Activated B cell treated with CpG ODN at 0.5 μM for 24 hours (primary cell): ENCODE measurements at regions of chr16 and their contacts with region 1.

Region 1: GRCh38 chr16:11715246-11715947 is 27.3 kb downstream of the TXNDC11 start:
- DNase-seq: no peak
- ATAC-seq: peak; percentile 29
- H3K4me3 Mint-ChIP-seq: no peak overlapping the region
- H3K27ac Mint-ChIP-seq: peak overlapping the region; percentile 50
- H3K4me1 Mint-ChIP-seq: peaks cover 36% of the 10 kb centered on the region
- H3K27me3 Mint-ChIP-seq: no peaks in the 10 kb centered on the region
- CTCF ChIP-seq: no peak

Region 2: GRCh38 chr16:11396241-11397048 is 319.0 kb before region 1 on chr16:
- CTCF ChIA-PET with region 1: interaction called, 5 read pairs
- POLR2A ChIA-PET with region 1: no interaction called
- intact Hi-C with region 1: loop called (anchors 1 kb)
- DNase-seq: peak; percentile 63
- ATAC-seq: peak; percentile 81
- H3K4me3 Mint-ChIP-seq: no peak overlapping the region
- H3K27ac Mint-ChIP-seq: no peak overlapping the region
- H3K4me1 Mint-ChIP-seq: peaks cover 4% of the 10 kb centered on the region
- H3K27me3 Mint-ChIP-seq: no peaks in the 10 kb centered on the region
- CTCF ChIP-seq: peak; percentile 90

Region 3: GRCh38 chr16:11530171-11530940 is 185.0 kb before region 1 on chr16:
- CTCF ChIA-PET with region 1: interaction called, 49 read pairs
- POLR2A ChIA-PET with region 1: no interaction called
- intact Hi-C with region 1: loop called (anchors 1 kb)
- DNase-seq: no peak
- ATAC-seq: no peak
- H3K4me3 Mint-ChIP-seq: no peak overlapping the region
- H3K27ac Mint-ChIP-seq: no peak overlapping the region
- H3K4me1 Mint-ChIP-seq: no peaks in the 10 kb centered on the region
- H3K27me3 Mint-ChIP-seq: peaks cover 6% of the 10 kb centered on the region
- CTCF ChIP-seq: no peak

Region 4: GRCh38 chr16:11611871-11612664 is 103.3 kb before region 1 on chr16:
- CTCF ChIA-PET with region 1: no interaction called
- POLR2A ChIA-PET with region 1: no interaction called
- intact Hi-C with region 1: no loop called
- DNase-seq: no peak
- ATAC-seq: no peak
- H3K4me3 Mint-ChIP-seq: peak overlapping the region; percentile 30
- H3K27ac Mint-ChIP-seq: no peak overlapping the region
- H3K4me1 Mint-ChIP-seq: peaks cover 38% of the 10 kb centered on the region
- H3K27me3 Mint-ChIP-seq: no peaks in the 10 kb centered on the region
- CTCF ChIP-seq: no peak

Region 5: GRCh38 chr16:11639925-11640899 is 75.2 kb before region 1 on chr16:
- CTCF ChIA-PET with region 1: interaction called, 35 read pairs
- POLR2A ChIA-PET with region 1: interaction called, 6 read pairs
- intact Hi-C with region 1: loop called (anchors 1 kb)
- DNase-seq: no peak
- ATAC-seq: no peak
- H3K4me3 Mint-ChIP-seq: no peak overlapping the region
- H3K27ac Mint-ChIP-seq: no peak overlapping the region
- H3K4me1 Mint-ChIP-seq: peaks cover 8% of the 10 kb centered on the region
- H3K27me3 Mint-ChIP-seq: no peaks in the 10 kb centered on the region
- CTCF ChIP-seq: no peak

Region 6: DNA sequence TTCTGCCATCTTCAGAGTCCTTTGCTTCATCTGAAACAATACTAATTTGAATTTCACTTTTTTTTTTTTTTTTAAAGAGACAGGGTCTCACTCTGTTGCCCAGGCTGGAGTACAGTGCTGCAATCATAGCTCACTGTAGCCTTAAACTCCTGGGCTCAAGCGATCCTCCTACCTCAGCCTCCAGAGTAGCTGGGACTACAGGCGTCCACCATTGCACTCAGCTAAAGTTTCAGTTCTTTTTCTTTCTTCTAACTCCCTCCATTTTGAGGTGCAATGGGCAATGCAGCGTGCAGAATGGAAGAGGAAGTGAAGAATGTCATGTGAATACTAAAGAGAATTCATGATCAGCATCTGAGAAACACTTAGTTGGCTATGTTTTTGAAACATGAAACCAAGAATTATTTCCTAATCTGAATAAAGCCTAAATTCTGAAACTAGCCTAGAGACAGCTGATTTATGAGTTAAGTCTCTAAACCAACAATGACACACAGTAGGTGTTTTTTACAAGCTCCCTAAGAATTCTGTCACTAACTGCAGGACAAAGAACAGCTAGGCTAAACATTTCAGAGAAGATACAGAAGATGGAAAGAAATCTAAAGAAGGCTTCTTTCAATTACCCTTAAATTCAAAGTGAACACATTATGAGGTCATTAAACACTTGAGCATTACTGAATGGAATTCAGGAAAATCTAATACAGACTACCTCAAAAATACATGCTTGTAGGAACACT is 26.2 kb before region 1 on chr16:
- CTCF ChIA-PET with region 1: interaction called, 20 read pairs
- POLR2A ChIA-PET with region 1: interaction called, 4 read pairs
- intact Hi-C with region 1: no loop called
- DNase-seq: no peak
- ATAC-seq: peak; percentile 98
- H3K4me3 Mint-ChIP-seq: peak overlapping the region; percentile 58
- H3K27ac Mint-ChIP-seq: peak overlapping the region; percentile 84
- H3K4me1 Mint-ChIP-seq: peaks cover 77% of the 10 kb centered on the region
- H3K27me3 Mint-ChIP-seq: no peaks in the 10 kb centered on the region
- CTCF ChIP-seq: no peak

Region 7: GRCh38 chr16:11757671-11758545 is 42.5 kb after region 1 on chr16:
- CTCF ChIA-PET with region 1: no interaction called
- POLR2A ChIA-PET with region 1: no interaction called
- intact Hi-C with region 1: no loop called
- DNase-seq: no peak
- ATAC-seq: no peak
- H3K4me3 Mint-ChIP-seq: no peak overlapping the region
- H3K27ac Mint-ChIP-seq: no peak overlapping the region
- H3K4me1 Mint-ChIP-seq: peaks cover 31% of the 10 kb centered on the region
- H3K27me3 Mint-ChIP-seq: no peaks in the 10 kb centered on the region
- CTCF ChIP-seq: no peak

Region 8: GRCh38 chr16:11816103-11816502 is 100.7 kb after region 1 on chr16:
- CTCF ChIA-PET with region 1: interaction called, 4 read pairs
- POLR2A ChIA-PET with region 1: no interaction called
- intact Hi-C with region 1: loop called (anchors 1 kb)
- DNase-seq: no peak
- ATAC-seq: no peak
- H3K4me3 Mint-ChIP-seq: no peak overlapping the region
- H3K27ac Mint-ChIP-seq: no peak overlapping the region
- H3K4me1 Mint-ChIP-seq: peaks cover 3% of the 10 kb centered on the region
- H3K27me3 Mint-ChIP-seq: no peaks in the 10 kb centered on the region
- CTCF ChIP-seq: no peak

Region 9: GRCh38 chr16:12664164-12664733 is 948.9 kb after region 1 on chr16:
- CTCF ChIA-PET with region 1: no interaction called
- POLR2A ChIA-PET with region 1: no interaction called
- intact Hi-C with region 1: no loop called
- DNase-seq: no peak
- ATAC-seq: no peak
- H3K4me3 Mint-ChIP-seq: no peak overlapping the region
- H3K27ac Mint-ChIP-seq: no peak overlapping the region
- H3K4me1 Mint-ChIP-seq: no peaks in the 10 kb centered on the region
- H3K27me3 Mint-ChIP-seq: no peaks in the 10 kb centered on the region
- CTCF ChIP-seq: no peak